Panc1 (cell line): ENCODE measurements at regions of chr10 and their contacts with region 1.

Region 1: DNA sequence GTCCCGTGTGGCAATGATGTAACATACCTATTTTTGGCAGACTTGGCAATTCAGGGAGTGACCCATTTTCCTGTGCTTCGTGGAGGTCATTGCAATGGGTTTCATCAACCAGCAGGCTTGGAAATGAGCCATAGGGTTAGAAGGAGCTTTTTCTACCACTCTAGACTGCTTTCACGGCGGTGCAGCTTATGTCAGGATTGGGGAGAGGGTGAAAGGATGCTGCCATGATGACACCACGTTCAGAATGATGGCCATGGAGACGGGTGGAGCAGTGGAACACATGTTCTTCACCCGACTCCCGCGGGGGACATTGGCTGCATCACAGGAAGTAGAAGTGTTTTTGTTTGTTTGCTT is 220.2 kb downstream of the EMX2 start:
- DNase-seq: no peak
- ATAC-seq: no peak
- H3K4me3 ChIP-seq: 0 out of 4 replicates have a peak overlapping the region, but pooled peaks of 1 of the 2 experiments have one; percentile 6
- H3K27ac ChIP-seq: no peak overlapping the region
- H3K4me1 ChIP-seq: no peaks in the 10 kb centered on the region
- H3K27me3 ChIP-seq: peaks cover 11% of the 10 kb centered on the region
- CTCF ChIP-seq: no peak

Region 2: GRCh38 chr10:117741524-117741923 is 21.3 kb before region 1 on chr10:
- CTCF ChIA-PET with region 1: interaction called, 11 read pairs
- POLR2A ChIA-PET with region 1: no interaction called
- in situ Hi-C with region 1: no loop called
- intact Hi-C with region 1: no loop called
- DNase-seq: no peak
- ATAC-seq: no peak
- H3K4me3 ChIP-seq: no peak overlapping the region
- H3K27ac ChIP-seq: no peak overlapping the region
- H3K4me1 ChIP-seq: no peaks in the 10 kb centered on the region
- H3K27me3 ChIP-seq: peaks cover 12% of the 10 kb centered on the region; the same call in 1 of the 2 replicates
- CTCF ChIP-seq: peak; percentile 35; the same call in 1 of the 2 replicates

Region 3: DNA sequence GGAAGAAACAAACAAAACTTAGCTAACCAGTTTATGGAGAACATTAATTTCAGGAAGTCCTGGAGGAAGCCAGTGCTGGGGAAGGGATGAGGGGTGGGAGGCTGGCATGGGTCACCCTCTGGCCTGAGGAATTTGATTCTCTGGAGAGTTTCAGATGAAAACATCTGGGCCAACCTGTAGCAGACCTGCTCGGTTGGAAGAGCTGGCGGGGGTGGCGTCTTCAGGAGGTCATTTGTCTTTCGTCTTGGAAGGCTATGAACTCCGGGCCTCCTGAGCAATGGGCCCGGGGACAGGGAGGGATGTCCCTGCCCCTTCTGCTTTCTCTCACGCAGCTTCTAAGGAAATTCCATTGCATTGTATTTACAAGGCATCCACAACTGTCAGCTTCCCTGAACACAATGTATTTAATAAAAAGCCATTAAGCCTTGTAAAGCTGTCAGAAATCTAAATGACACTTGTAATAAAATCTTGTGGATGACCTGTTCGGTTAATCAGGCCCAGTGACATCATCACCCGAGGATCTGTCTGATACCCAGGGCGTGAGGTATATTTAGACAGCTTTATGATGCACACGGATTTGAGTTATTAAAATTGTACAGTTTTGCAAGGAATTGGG is 33.4 kb after region 1 on chr10:
- CTCF ChIA-PET with region 1: no interaction called
- POLR2A ChIA-PET with region 1: no interaction called
- in situ Hi-C with region 1: no loop called
- intact Hi-C with region 1: no loop called
- DNase-seq: no peak
- ATAC-seq: no peak
- H3K4me3 ChIP-seq: no peak overlapping the region
- H3K27ac ChIP-seq: no peak overlapping the region
- H3K4me1 ChIP-seq: no peaks in the 10 kb centered on the region
- H3K27me3 ChIP-seq: peaks cover 10% of the 10 kb centered on the region; the same call in 1 of the 2 replicates
- CTCF ChIP-seq: no peak